ENCODE measurements at regions of chr20 and their contacts with region 1.

Region 1: DNA sequence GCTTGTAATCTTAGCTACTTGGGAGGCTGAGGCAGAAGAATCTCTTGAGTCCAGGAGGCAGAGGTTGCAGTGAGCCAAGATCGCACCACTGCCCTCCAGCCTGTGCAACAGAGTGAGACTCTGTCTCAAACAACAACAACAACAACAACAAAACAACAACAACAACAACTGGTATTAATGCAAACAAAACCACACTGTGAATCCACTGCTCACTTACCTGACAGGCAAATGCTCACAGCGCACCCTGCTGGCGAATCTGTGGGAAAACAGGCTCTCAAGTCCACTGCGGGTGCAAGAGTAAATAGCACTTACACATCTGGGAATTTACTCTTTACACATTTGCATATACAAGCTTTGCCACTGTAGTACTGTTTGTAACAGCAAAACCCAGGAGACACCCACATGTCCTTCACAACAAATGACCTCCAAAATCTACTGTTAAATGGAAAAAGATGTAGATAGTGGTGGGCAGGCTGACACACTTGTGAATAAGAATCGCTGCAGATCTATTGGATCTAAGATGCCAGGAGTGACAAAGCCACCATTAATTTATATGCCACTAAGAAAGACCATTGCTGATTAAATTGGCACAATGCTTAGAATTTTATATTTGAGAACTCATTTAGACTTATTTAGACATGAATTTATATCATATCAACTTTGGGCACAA is 29.3 kb downstream of the NSFL1C start:
- DNase-seq: peak; percentile 86 to 92 (median 91)
- H3K4me3 ChIP-seq: no peak overlapping the region
- H3K27ac ChIP-seq: no peak overlapping the region
- H3K4me1 ChIP-seq: peaks cover 15 to 20% (median 16%) of the 10 kb centered on the region in 4 experiments
- H3K27me3 ChIP-seq: no peaks in the 10 kb centered on the region

Region 2: DNA sequence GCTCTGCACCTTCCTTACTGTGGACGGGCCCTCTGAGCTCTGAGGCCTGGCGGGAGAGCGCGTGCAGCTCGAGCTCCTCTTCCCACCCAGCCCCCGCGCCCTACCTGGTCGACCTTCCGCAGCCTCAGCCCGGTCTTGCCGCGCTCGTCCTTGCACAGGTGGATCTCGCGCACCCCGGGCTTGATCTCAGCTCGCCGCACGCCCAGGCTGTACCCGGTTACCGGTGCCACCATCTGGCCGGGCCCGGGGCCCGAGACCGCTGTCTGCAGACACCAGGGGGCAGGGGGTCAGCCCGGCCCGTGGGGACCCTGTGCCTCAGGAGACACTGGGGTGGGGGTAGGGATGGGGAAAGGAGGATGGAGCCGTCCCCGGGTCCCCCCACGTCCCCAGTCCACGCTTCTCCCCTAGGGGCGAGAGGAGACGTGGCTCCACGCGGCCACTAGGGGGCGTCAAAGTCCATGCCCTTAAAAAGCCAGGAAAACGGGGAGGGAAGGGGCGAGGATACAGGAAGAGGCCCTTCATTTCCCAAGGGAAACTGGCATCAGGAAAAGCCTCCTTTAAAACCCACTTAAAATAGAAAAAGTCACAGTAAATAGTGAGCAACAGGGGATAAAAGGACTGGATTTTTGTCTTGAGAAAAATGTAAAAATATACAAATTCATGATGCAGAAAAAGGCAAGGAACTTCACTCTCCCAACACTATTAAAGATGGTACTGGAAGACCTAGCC is 124.0 kb before region 1 on chr20:
- CTCF ChIA-PET with region 1: interaction called, 57 read pairs
- POLR2A ChIA-PET with region 1: no interaction called
- DNase-seq: peak; percentile 54 to 58 (median 57)
- H3K4me3 ChIP-seq: peak overlapping the region in 1 of 7 experiments; percentile 40
- H3K27ac ChIP-seq: no peak overlapping the region
- H3K4me1 ChIP-seq: peaks cover 0 to 16% (median 4%) of the 10 kb centered on the region in 4 experiments
- H3K27me3 ChIP-seq: no peaks in the 10 kb centered on the region

Region 3: DNA sequence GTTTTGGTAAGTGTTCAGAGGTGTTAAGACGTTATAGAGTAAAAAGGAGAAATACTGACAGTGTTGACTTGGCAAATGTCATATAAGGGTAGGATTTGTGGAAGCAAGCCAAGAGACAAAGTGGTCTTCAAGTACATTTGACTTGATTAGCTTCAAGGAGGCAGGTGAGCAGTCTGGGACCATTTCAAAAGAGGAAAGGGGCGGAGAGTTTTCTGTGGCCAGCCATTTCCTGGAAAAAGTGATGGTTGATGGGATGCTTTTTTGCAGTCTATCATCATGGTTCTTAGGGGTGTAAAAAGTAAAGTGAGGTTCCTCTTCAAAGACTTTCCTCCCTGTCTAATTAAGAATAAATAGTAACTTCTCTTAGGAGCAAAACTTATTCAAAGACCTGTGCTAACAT is 73.3 kb before region 1 on chr20:
- CTCF ChIA-PET with region 1: interaction called, 10 read pairs
- POLR2A ChIA-PET with region 1: no interaction called
- DNase-seq: peak in 1 of 3 donors; percentile 25
- H3K4me3 ChIP-seq: no peak overlapping the region
- H3K27ac ChIP-seq: no peak overlapping the region
- H3K4me1 ChIP-seq: peaks cover 7 to 24% (median 13%) of the 10 kb centered on the region in 4 experiments
- H3K27me3 ChIP-seq: no peaks in the 10 kb centered on the region

Region 4: DNA sequence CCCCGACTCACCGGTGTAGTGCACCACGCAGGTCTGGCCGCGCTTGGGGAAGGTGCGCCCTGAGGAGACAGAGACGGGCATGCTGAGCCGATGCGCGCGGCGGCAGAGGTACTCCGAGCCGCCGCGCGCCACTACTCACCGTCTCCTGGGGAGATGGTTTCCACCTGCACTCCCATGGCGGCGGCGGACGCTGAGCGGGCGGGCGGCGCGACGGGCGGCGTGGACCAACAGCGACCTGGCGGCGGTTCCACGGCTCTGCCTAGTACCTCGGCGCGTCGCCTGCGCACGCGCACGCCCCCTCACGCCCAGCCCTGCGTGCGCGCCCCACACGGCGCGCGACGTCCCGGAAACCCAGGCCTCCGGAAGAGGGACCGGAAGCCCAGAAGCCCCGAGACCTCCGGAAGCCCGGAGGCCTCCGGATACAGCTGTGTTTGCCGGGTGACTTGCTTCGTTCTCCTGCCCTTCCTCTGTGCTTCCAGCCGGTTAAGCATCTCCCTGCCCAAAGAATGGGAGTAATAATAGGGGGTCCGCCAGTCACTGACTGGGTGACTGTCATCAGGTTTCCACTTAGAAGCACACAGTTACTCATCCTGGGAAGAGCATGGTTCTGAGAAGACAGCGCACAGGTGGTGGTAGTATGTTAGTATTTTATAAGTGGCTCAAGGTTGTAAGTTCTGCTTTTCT is 44.4 kb before region 1 on chr20 and contains the start of gene FKBP1A:
- CTCF ChIA-PET with region 1: interaction called, 38 read pairs
- POLR2A ChIA-PET with region 1: interaction called, 4 read pairs
- DNase-seq: peak; percentile 94 to 97 (median 96)
- H3K4me3 ChIP-seq: peak within 1 kb of the TSS; percentile 53 to 93 (median 84)
- H3K27ac ChIP-seq: peak within 1 kb of the TSS; percentile 27 to 80
- H3K4me1 ChIP-seq: peaks cover 28 to 85% (median 74%) of the 10 kb centered on the region in 4 experiments
- H3K27me3 ChIP-seq: no peaks in the 10 kb centered on the region

Region 5: DNA sequence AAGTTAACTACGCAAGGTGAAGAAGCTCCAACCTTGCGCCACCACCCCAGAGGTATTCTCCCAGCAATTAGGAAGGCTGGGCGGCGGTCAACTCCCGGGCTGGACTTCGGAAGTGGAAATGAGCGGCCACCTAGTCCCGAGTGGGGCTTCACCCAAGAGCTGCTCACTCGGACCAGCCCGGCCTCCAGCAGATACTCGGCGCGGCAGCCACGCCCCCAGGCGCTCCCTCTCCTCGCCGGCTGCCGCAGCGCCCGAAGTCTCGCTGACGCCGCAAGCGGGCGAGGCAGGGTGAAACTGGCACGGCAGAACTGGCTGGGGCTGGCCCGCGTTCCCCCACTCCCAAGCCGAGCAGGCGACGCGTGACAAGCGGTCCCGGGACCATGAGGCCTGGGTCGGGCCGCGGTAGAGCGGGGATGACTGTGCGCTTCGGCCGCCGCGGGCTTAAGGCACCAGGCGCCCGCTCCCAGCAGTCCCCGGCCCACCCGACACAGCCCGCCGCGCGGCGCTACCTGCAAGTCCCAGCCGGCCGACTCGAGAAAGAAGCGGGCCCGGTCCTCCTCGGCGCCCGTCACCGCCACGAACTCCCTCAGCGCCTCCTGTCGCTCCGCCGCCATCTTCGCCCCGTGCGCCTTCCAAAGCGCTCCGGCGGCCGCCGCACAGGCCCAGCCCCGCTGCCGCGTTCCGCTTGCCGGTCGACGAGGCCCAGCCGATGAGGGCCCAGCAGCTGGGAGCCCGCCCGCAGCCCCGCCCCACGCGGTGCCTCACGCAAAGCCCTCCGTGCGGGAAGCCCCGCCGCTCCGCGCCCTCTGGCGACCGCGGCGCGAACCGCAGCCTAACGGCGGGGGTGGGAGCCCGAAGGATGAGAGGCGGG is 29.1 kb after region 1 on chr20 and contains the start of gene NSFL1C:
- CTCF ChIA-PET with region 1: interaction called, 32 read pairs
- POLR2A ChIA-PET with region 1: no interaction called
- DNase-seq: peak; percentile 96 to 98 (median 97)
- H3K4me3 ChIP-seq: peak within 1 kb of the TSS; percentile 84 to 91 (median 89)
- H3K27ac ChIP-seq: peak within 1 kb of the TSS; percentile 99 to 100
- H3K4me1 ChIP-seq: peaks cover 13 to 54% (median 39%) of the 10 kb centered on the region in 4 experiments
- H3K27me3 ChIP-seq: no peaks in the 10 kb centered on the region